ENCODE measurements at regions of chr10 and their contacts with region 1.

Region 1: GRCh38 chr10:71727738-71728737 is 8.5 kb upstream of the C10orf105 start:
- DNase-seq: peak; percentile 80
- H3K4me3 Mint-ChIP-seq: peak overlapping the region; percentile 55
- H3K27ac Mint-ChIP-seq: peak overlapping the region; percentile 98
- H3K4me1 Mint-ChIP-seq: peaks cover 89% of the 10 kb centered on the region
- H3K27me3 Mint-ChIP-seq: no peaks in the 10 kb centered on the region

Region 2: DNA sequence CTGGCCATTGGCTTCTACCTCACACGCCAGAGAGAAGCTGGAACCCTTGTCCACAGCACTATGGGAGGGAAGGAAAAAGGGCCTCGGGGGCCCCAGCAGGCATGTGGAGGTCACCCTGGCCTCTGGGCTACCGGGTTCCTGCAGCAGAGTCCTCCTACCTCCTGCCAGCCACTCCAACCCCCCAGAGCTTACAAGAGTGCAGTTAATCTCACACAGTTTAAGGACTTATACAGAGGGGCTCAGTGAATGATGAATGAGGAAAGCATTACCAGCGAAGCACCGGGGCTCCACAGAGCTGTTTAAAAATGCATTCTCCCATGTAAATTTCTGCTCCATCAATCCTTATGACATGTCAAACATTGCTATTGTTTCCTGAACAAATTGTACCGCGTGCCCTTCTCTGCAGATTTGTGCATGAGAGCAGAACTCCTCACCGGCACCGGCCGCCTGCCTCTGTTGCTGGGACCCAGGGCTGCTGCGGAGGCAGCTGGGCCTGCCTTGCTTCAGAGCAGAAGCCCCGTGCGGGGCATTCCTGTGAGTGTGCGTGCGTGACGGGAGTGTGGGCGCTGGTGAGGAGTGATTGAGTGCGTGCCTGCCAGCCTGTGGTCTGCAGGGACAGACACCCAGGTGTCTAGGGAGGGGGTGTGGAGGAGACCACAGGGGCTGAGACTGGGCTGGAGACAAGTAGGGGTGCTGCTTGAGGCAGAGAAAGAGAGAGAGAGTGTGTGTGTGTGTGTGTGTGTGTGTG is 61.2 kb before region 1 on chr10:
- CTCF ChIA-PET with region 1: no interaction called
- POLR2A ChIA-PET with region 1: no interaction called
- DNase-seq: no peak
- H3K4me3 Mint-ChIP-seq: no peak overlapping the region
- H3K27ac Mint-ChIP-seq: no peak overlapping the region
- H3K4me1 Mint-ChIP-seq: peaks cover 13% of the 10 kb centered on the region
- H3K27me3 Mint-ChIP-seq: peaks cover 3% of the 10 kb centered on the region

Region 3: GRCh38 chr10:71708301-71708703 is 19.7 kb before region 1 on chr10:
- CTCF ChIA-PET with region 1: interaction called, 40 read pairs
- POLR2A ChIA-PET with region 1: no interaction called
- DNase-seq: peak; percentile 64
- H3K4me3 Mint-ChIP-seq: no peak overlapping the region
- H3K27ac Mint-ChIP-seq: peak overlapping the region; percentile 80
- H3K4me1 Mint-ChIP-seq: peaks cover 39% of the 10 kb centered on the region
- H3K27me3 Mint-ChIP-seq: no peaks in the 10 kb centered on the region

Region 4: DNA sequence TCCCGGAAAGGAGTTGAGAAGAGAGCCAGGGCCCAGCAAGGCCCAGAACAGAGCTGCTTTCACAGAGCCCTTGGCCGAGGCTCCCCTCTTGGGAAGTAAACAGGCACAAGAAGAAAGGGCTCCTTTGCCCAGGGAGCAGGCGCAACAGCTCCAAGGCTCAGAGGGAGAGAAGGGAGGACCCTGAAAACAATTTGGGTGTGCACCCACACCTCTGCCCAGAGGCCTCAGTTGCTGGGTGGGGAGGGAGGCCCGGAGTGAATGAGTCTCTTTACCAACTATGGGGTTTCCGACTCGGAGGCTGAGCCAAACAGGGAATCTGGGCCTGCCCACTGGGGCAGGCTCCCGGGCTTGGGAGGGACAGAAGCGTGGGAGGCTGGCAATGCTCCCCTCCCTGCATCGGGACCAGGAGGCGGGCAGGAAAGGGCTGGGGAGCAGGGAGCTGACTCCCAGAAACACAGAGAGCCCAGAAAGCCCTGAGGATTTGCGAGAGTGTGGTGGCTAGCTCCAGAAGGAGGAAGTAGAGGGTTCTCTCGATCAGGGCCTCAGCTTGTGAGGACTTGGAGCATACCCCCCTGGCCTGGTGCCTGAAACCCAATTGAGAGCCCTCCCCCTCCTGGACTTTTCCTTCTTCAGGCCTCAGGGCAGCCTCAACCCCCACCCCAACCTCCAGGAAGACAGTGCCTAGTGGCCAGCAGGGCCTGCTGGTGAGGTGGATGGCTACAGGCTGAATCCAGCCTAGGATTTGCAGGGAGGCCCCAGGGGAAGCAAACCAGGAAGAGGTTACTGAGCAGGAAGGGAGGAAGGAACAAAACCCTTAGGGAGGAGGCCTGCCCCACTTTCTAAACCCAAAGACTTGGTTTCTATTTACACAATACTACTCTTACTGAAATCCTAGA is 14.7 kb before region 1 on chr10:
- CTCF ChIA-PET with region 1: interaction called, 40 read pairs
- POLR2A ChIA-PET with region 1: no interaction called
- DNase-seq: no peak
- H3K4me3 Mint-ChIP-seq: peak overlapping the region; percentile 55
- H3K27ac Mint-ChIP-seq: peak overlapping the region; percentile 97
- H3K4me1 Mint-ChIP-seq: peaks cover 58% of the 10 kb centered on the region
- H3K27me3 Mint-ChIP-seq: no peaks in the 10 kb centered on the region

Region 5: DNA sequence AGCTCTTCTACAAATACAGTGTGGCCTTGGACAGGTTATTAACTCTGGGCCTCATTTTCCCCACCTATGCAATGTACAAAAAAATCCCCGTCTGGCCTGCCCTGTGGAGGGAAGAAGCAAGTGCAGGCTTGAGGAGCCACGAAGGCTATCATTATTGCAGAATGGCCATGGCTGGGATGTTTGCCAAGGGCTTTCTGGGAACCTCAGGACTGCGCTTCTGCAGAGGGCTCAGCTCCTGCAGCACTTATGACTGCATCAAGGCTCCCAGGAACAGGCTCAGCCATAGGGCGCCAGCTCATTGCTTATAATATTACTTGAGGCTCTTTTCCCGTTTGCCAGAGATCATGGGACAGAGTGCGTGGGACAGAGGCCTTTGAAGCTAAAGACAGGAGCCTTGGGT is 12.0 kb after region 1 on chr10:
- CTCF ChIA-PET with region 1: interaction called, 39 read pairs
- POLR2A ChIA-PET with region 1: no interaction called
- DNase-seq: no peak
- H3K4me3 Mint-ChIP-seq: no peak overlapping the region
- H3K27ac Mint-ChIP-seq: peak overlapping the region; percentile 71
- H3K4me1 Mint-ChIP-seq: peaks cover 97% of the 10 kb centered on the region
- H3K27me3 Mint-ChIP-seq: no peaks in the 10 kb centered on the region

Region 6: DNA sequence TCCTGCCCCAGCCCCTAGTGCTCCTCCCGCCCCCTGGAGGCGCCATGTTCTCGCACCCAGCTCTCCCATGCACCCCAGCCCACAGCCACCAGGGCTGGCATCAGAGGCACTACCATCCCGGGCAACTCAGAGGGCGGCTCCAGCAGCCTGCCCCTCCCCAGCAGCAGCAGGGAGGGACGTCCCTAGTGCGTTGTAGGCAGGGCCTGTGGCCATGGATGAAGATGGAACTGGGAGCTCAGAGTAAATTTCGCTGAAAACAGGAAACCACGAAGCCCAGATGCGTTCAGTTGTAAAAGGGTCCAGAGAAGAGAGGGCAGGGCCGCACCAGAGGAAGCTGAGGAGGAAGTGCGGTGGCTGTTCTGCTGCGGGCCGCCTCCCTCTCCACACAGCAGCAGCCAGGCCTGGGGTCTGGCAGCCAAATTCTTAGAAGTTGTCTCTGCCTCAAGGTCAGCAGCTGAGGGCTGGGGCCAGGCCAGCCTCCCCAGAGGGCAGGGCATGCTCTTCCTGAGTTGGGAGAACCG is 20.7 kb after region 1 on chr10:
- CTCF ChIA-PET with region 1: interaction called, 39 read pairs
- POLR2A ChIA-PET with region 1: interaction called, 5 read pairs
- DNase-seq: peak; percentile 93
- H3K4me3 Mint-ChIP-seq: peak overlapping the region; percentile 67
- H3K27ac Mint-ChIP-seq: peak overlapping the region; percentile 97
- H3K4me1 Mint-ChIP-seq: peaks cover 97% of the 10 kb centered on the region
- H3K27me3 Mint-ChIP-seq: no peaks in the 10 kb centered on the region

Measured in activated CD4-positive, alpha-beta T cell treated with anti-CD3 and anti-CD28 coated beads, Interleukin-2, amount 10 ng/mL, durations not matched to agents 7 days and 5 days (primary cell).